ENCODE measurements at regions of chr17 and their contacts with region 1.

Region 1: DNA sequence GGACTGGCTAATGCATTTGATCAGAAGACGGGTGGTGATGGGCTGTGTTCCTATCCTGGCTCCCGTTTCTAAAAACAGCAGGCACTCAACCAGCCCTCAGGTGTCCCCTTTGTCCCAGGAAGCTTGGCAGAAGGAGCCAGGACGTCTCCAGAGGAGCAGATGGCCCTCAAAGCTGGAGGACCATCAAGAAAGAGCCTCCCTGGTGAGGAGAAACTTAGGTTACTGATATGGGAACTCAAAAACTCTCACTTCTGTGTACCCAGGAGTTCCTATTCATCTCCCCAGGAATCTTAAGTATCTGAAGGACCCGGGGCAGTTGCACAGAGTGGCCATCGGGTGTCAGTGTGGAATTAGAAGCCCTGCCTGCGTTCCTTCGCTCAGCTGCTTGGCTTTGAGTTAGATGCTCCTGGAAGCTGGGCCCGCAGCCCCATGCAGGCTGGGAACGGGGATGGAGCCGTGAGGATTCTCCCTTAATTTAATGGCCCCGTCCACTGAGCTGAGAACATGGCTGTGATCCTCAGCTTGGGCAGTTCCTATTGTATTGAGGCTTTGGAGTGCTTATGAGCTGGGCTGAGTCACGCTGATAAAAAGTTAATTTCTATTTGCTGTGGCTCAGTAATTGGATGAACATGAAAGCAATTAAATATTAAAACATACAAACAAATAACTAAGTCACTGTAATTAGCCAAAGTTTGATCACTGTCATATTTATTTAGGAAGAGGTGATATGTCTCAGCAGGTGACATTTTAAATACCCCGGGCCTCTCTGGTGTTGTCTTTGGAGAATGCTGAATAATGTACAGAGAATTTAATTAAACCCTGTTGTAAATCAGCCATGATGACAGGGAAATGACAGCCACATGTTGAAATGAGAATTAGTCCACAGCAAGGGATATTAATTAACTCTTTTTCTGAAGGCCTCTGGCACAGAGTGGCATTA is 402.1 kb downstream of the SEC14L1 start:
- DNase-seq: peak; percentile 88 to 91
- ATAC-seq: peak; percentile 95 to 97
- H3K4me3 ChIP-seq: no peak overlapping the region
- H3K27ac ChIP-seq: peak overlapping the region; percentile 10 to 48; a peak in 1 of 6 replicates
- H3K4me1 ChIP-seq: peaks cover 16% of the 10 kb centered on the region
- CTCF ChIP-seq: peak; percentile 97
- EP300 ChIP-seq: no peak
- POLR2A ChIP-seq: no peak
- RAD21 ChIP-seq: peak; percentile 99 to 100

Region 2: DNA sequence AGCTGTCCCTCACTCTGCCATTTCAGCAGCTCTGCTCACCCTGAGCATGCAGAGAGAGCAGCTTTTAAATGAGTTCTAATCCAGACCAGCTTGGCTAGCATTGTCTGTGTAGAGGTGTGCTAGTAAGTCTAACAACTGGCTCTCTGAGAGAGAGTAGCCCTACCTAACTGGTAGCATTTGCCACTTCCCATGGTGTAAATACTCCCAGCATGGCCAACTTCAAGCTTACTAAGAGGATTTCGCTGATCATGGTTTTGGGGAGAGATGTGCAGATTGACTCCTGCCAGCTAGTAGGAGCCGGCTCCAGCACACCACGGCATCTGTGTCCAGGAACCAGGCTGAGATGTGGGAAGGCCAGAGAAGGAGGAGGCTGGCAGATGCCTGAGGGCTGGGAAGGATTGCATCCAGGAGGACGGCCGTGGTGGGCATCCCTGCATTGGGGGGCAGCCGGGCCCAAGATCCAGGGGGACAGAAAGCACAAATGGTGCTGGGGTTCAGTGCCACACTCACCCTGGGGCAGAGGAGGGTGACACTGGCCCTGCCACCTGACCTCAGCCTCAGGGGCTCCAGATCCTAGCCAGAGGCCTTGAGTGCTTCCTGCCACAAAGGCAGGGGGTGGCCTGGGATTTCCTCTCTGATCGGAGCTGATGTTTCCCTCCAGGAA is 20.8 kb after region 1 on chr17:
- CTCF ChIA-PET with region 1: interaction called, 11 read pairs
- POLR2A ChIA-PET with region 1: no interaction called
- DNase-seq: no peak
- ATAC-seq: no peak
- H3K4me3 ChIP-seq: no peak overlapping the region
- H3K27ac ChIP-seq: no peak overlapping the region
- H3K4me1 ChIP-seq: no peaks in the 10 kb centered on the region
- CTCF ChIP-seq: no peak
- EP300 ChIP-seq: no peak
- POLR2A ChIP-seq: no peak
- RAD21 ChIP-seq: no peak

Region 3: DNA sequence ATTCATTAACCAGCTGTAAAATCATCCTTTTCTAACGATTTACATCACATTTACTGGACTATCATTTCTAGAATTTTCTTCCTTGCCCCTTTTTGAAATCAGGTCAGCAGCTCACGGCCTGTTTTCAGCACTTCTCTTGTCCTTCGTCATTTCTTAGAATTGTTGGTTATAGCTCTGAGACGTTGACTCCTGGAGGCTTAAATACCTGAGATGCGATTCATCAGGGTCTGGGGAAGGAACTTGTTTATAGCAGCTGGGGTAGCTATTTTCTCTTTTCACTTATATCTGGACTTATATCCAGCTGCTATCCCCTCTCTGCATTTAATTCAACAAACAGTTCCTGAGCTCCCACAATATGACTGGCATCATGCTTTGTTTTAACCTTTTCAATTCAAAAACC is 77.0 kb after region 1 on chr17:
- CTCF ChIA-PET with region 1: interaction called, 13 read pairs
- POLR2A ChIA-PET with region 1: interaction called, 6 read pairs
- DNase-seq: peak in 1 of 2 experiments; percentile 45
- ATAC-seq: no peak
- H3K4me3 ChIP-seq: no peak overlapping the region
- H3K27ac ChIP-seq: peak overlapping the region; percentile 84 to 95
- H3K4me1 ChIP-seq: peaks cover 51% of the 10 kb centered on the region
- CTCF ChIP-seq: no peak
- EP300 ChIP-seq: no peak
- POLR2A ChIP-seq: no peak
- RAD21 ChIP-seq: no peak

Region 4: DNA sequence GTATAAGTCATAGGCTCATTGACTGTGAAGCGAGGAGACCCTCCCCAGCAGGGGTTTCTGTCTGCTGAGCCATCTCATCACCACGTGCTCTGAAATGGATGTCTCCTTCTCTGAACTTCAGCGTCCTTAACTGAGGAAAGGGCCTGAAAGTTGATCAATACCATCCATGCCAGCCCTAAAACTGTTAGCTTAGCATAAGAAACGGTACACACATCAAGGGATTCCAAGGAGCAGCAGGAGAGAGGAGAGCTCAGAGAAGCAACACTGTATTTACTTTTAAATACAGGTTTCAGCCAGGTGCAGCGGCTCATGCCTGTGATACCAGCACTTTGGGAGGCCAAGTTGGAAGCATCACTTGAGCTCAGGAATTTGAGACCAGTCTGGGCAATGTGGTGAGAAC is 166.8 kb after region 1 on chr17:
- CTCF ChIA-PET with region 1: interaction called, 11 read pairs
- POLR2A ChIA-PET with region 1: no interaction called
- DNase-seq: no peak
- ATAC-seq: no peak
- H3K4me3 ChIP-seq: no peak overlapping the region
- H3K27ac ChIP-seq: no peak overlapping the region
- H3K4me1 ChIP-seq: no peaks in the 10 kb centered on the region
- CTCF ChIP-seq: no peak
- EP300 ChIP-seq: no peak
- POLR2A ChIP-seq: no peak
- RAD21 ChIP-seq: no peak

Region 5: GRCh38 chr17:78005452-78006171 is 462.8 kb after region 1 on chr17:
- CTCF ChIA-PET with region 1: interaction called, 15 read pairs
- POLR2A ChIA-PET with region 1: no interaction called
- DNase-seq: no peak
- ATAC-seq: no peak
- H3K4me3 ChIP-seq: no peak overlapping the region
- H3K27ac ChIP-seq: no peak overlapping the region
- H3K4me1 ChIP-seq: no peaks in the 10 kb centered on the region
- CTCF ChIP-seq: no peak
- EP300 ChIP-seq: no peak
- POLR2A ChIP-seq: no peak
- RAD21 ChIP-seq: no peak

Measured in A549 (cell line).